ENCODE measurements at regions of chr14 and their contacts with region 1.

Region 1: DNA sequence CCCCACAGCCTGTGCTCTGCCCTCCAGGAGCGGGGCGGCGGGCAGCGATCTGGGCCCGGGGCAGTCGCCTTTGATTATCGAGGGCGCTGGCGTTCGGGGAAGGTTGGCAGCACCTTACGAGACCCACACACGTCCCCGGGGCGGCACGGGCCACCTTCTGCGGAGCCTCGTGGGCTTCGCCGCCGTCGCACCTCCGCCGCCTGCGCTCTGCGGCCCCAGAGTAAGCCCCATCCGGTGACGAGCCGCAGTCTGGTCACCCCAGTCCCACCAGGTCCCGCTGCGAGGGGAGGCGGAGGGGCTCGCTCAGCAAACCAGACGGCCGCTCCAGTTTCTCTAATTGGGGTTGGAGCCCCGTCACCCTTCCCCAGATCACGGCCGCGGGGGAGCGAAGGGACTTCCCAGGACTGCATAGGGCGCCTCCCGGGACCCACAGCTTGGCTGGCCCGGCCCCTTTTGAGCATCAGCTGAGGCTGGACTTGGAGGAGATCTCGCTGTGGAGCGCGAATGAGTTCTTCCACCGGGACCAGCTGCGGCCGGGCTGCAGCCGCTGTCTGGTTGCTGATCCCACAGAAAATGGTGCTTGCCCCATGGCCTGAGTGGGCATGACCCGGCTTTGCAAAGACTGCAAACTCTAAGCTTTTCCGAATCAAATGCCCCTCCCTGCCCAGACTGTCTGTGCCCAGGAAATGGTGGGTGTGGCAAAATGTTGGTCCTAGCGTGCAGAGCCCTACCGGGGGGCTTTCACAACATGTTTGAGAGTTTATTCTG is 560 bp downstream of the LGALS3 start:
- DNase-seq: peak; percentile 76 to 89 (median 80)
- ATAC-seq: peak; percentile 59 to 76 (median 72)
- H3K4me3 ChIP-seq: peak overlapping the region; percentile 76 to 95 (median 90)
- H3K27ac ChIP-seq: peak overlapping the region; percentile 94 to 99 (median 97)
- H3K4me1 ChIP-seq: peaks cover 6 to 88% (median 50%) of the 10 kb centered on the region in 12 donors
- H3K27me3 ChIP-seq: no peaks in the 10 kb centered on the region
- CTCF ChIP-seq: no peak
- POLR2A ChIP-seq: no peak

Region 2: DNA sequence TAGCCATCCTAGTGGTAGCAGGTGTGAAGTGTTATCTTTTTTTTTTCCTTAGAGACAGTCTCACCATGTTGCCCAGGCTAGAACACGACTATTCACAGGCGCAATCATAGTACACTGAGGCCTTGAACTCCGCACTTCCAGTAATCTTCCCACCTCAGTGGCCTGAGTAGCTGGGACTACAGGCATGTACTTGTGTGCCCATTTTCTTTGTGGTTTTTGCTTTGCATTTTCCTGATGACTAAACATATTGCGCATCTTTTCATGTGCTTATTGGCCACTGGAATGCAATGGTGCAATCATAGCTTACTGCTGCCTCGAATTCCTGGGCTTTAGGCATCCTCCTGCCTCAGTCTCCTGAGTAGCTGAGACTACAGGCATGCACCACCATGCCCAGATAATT is 193.7 kb before region 1 on chr14:
- intact Hi-C with region 1: no loop called
- DNase-seq: no peak
- ATAC-seq: no peak
- H3K4me3 ChIP-seq: no peak overlapping the region
- H3K27ac ChIP-seq: no peak overlapping the region
- H3K4me1 ChIP-seq: no peaks in the 10 kb centered on the region
- H3K27me3 ChIP-seq: no peaks in the 10 kb centered on the region
- CTCF ChIP-seq: no peak
- POLR2A ChIP-seq: no peak

Region 3: DNA sequence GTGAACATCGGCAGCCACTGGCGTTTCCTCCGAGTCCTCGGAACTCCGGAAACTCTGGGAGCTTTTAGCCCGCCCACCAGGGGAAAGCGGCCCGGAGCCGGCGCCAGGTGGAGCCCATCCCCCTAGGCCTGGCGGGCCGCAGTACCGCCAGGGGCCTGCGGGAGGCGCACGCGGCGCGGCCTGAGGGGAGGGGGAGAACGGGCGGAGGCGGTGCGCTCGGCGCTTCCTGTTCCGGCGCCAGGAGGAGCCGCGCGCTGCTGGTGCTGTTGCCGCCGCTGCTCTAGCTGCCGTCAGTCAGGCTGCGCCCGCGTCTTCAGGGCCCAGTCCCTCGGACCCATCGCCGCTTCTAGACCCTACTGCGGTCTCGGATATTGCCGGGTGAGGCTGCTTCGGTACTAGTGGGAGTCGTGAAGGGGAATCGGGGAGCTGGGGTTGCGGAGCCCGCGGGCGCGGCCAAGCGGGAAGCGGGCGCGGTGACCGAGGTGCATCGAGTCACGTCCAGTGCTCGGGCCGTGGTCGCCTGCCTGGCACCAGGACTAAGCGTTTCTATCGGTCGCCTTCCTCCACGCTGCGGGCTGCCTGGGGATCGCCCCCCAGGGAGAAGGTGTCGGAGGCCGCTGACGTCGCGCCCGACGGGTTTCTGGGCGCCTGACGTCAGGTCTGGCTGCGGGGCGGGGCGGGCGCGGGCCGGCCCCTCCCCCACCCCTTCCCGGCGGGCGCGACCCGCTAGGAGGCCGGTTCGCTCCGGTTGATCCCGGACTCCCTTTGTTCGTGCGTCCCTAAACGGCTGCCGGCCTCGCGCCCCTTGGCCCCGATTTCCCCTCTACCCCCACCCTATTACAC is 78.0 kb before region 1 on chr14 and contains the start of gene MAPK1IP1L:
- intact Hi-C with region 1: loop called in 1 of 10 experiments (anchors 5 kb)
- DNase-seq: peak; percentile 92 to 97 (median 94)
- ATAC-seq: peak; percentile 89 to 98 (median 97)
- H3K4me3 ChIP-seq: peak within 1 kb of the TSS; percentile 74 to 99 (median 92)
- H3K27ac ChIP-seq: peak within 1 kb of the TSS; percentile 97 to 100 (median 100)
- H3K4me1 ChIP-seq: peaks cover 0 to 46% (median 32%) of the 10 kb centered on the region in 12 donors
- H3K27me3 ChIP-seq: no peaks in the 10 kb centered on the region
- CTCF ChIP-seq: peak; percentile 99 to 100 (median 100)
- POLR2A ChIP-seq: peak; percentile 80 to 93
- total RNA-seq, gene MAPK1IP1L: 58.9 to 159 (median 80.1) TPM

Region 4: DNA sequence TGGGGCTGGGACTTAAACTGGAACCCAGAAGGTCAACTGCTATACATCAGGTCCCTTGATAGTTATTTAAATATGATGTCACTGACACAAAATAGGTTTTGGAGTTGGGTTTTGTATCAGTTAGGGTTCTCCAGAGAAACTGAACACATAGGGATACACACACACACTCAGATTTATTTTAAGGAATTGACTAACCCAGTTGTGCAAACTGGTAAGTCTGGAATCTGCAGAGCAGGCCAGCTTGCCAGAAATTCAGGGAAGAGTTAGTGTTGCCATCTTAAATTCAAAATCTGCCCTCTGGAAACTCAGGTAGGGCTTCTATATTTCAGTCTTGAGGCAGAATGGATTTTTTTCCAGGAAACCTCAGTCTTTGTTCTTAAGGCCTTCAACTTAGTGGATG is 41.3 kb before region 1 on chr14:
- intact Hi-C with region 1: loop called in 6 of 10 experiments (anchors 1 to 5 kb)
- DNase-seq: no peak
- ATAC-seq: peak in 1 of 4 donors; percentile 46
- H3K4me3 ChIP-seq: no peak overlapping the region
- H3K27ac ChIP-seq: no peak overlapping the region
- H3K4me1 ChIP-seq: peaks cover 0 to 20% (median 0%) of the 10 kb centered on the region in 12 donors
- H3K27me3 ChIP-seq: no peaks in the 10 kb centered on the region
- CTCF ChIP-seq: no peak
- POLR2A ChIP-seq: no peak

Region 5: GRCh38 chr14:55094321-55095157 is 35.1 kb before region 1 on chr14:
- intact Hi-C with region 1: loop called in 6 of 10 experiments (anchors 1 to 5 kb)
- DNase-seq: no peak
- ATAC-seq: no peak
- H3K4me3 ChIP-seq: no peak overlapping the region
- H3K27ac ChIP-seq: no peak overlapping the region
- H3K4me1 ChIP-seq: peaks cover 0 to 37% (median 12%) of the 10 kb centered on the region in 12 donors
- H3K27me3 ChIP-seq: no peaks in the 10 kb centered on the region
- CTCF ChIP-seq: no peak
- POLR2A ChIP-seq: no peak

Region 6: DNA sequence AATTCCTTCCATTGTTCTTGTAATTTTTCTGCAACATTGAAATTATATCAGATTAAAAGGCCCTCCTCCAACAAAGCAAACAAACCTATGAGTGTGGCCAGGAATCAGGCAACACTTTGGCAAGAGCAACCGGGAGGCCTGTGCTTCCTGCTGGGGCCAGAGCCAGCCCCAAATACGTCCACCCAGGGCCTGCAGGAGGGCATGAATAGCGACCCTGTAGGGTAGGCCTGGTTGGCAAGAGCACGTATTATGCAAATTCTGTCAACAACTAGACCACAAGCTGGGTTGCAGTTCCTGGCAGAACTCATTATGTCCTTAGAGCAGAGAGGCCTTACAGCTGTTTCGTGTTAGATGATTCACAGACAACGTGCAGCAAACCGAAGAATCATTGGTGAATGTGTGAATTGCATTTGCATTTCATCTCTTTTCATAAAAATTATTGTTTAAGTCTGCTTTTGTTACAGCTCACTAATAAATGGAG is 27.4 kb before region 1 on chr14:
- intact Hi-C with region 1: loop called in 3 of 10 experiments (anchors 2 kb)
- DNase-seq: peak; percentile 74 to 86 (median 77)
- ATAC-seq: peak; percentile 72 to 92 (median 84)
- H3K4me3 ChIP-seq: no peak overlapping the region
- H3K27ac ChIP-seq: peak overlapping the region; percentile 67 to 96 (median 86)
- H3K4me1 ChIP-seq: peaks cover 19 to 93% (median 60%) of the 10 kb centered on the region in 12 donors
- H3K27me3 ChIP-seq: no peaks in the 10 kb centered on the region
- CTCF ChIP-seq: no peak
- POLR2A ChIP-seq: peak in 1 of 2 donors; percentile 23

Region 7: DNA sequence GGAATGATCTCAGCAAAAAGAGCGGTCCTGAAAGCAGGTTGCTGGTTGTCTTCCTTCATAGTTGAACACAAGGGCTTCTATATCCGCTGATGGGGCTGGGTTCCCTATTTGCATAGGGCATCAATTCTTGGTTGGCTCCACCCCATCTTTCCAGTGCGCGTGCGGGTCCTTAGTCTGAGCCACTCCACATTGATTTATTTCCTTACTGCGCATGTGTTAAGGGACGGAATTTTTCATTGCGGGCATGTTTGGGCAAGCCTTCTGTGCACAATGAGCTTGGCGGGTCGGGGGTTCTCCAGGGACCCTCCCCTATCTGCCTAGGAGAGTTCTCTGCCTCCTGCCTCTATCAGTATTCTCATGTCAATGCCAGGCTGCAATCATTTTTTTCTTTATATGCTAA is 83.0 kb after region 1 on chr14:
- intact Hi-C with region 1: no loop called
- DNase-seq: no peak
- ATAC-seq: no peak
- H3K4me3 ChIP-seq: no peak overlapping the region
- H3K27ac ChIP-seq: no peak overlapping the region
- H3K4me1 ChIP-seq: no peaks in the 10 kb centered on the region
- H3K27me3 ChIP-seq: no peaks in the 10 kb centered on the region
- CTCF ChIP-seq: no peak
- POLR2A ChIP-seq: no peak